Activated CD4-positive, alpha-beta T cell treated with anti-CD3 and anti-CD28 coated beads, Interleukin-2, amount 10 ng/mL, durations not matched to agents 24 days and 14 days (primary cell): ENCODE measurements at regions of chr6 and their contacts with region 1.

Region 1: GRCh38 chr6:157764178-157765033 is 58.6 kb upstream of the SNX9 start:
- DNase-seq: peak; percentile 95
- H3K4me3 Mint-ChIP-seq: peak overlapping the region; percentile 57
- H3K27ac Mint-ChIP-seq: peak overlapping the region; percentile 96
- H3K4me1 Mint-ChIP-seq: peaks cover 70% of the 10 kb centered on the region
- H3K27me3 Mint-ChIP-seq: peaks cover 6% of the 10 kb centered on the region

Region 2: GRCh38 chr6:157123234-157123633 is 641.2 kb before region 1 on chr6:
- intact Hi-C with region 1: no loop called
- DNase-seq: no peak
- H3K4me3 Mint-ChIP-seq: no peak overlapping the region
- H3K27ac Mint-ChIP-seq: no peak overlapping the region
- H3K4me1 Mint-ChIP-seq: peaks cover 1% of the 10 kb centered on the region
- H3K27me3 Mint-ChIP-seq: no peaks in the 10 kb centered on the region

Region 3: DNA sequence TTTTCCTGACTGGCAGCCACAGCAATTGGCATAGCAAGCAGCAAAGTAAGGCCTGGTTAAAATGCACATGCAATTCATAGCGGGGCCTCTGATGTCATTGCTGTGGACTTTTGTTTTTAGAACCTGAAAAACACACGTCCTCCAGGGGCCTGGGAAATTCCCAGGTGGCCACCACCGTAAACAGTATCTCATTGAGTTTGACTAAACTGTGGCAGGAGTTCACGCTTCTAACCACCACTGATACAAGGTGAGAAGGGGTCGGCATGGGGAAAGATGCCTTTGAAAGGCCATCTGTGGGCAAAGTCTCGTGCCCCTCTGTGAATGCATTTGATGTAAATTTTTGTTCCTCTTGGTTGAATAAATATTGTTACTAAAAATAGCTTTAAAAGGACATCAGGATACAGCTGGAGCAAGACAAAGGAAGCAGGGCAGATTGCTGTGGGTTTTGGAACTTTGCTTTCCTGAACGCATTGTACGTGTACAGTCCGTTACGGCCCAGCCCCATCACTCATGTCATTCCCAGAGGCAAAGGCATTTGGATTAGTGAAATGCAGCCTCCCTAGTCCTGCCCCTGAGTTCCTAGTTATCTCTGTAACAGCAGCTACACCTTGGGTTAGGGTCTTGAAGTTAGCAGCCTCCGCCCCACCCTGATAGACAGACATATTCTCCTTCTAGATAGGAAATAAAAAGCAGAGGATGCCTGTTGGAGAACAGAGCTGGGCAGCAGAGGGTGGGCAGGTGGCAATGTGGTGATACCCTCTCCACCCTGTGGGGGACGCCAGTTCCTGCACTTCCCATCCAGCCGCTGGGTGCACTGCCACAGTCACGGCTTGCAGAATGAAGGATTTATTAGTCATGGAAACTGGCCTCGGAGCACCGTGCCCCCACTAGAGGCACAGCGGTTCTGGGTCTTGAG is 303.1 kb before region 1 on chr6:
- intact Hi-C with region 1: loop called (anchors 1 kb)
- DNase-seq: peak; percentile 91
- H3K4me3 Mint-ChIP-seq: peak overlapping the region; percentile 48
- H3K27ac Mint-ChIP-seq: peak overlapping the region; percentile 97
- H3K4me1 Mint-ChIP-seq: peaks cover 64% of the 10 kb centered on the region
- H3K27me3 Mint-ChIP-seq: no peaks in the 10 kb centered on the region

Region 4: DNA sequence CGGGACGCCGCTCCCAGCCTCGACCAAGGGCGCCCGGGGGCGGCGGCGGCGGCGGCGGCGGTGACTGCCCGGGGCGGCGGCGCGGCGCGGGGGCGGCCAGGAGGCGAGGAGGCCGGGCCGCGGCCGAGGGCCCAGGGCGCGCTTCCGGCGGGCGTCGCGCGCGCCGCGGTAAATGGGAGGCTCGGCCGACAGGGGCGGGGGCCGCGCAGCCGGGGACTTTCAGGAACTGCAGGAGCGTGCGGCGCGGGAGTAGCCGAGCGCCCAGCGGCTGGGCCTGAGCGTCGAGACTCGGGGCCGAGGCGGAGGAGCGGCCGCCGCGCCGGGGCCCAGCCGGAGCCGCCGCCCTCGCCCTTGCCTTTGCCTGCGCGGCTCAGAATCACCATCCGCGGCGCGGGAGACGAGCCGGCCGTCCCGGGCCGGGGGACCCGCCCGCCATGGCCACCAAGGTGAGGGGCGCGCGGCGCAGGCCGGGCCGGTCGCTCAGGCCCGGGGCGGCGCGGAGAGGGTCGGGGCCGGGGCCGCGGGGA is 58.7 kb after region 1 on chr6 and contains the start of gene SNX9:
- intact Hi-C with region 1: loop called (anchors 1 kb)
- DNase-seq: peak; percentile 89
- H3K4me3 Mint-ChIP-seq: peak within 1 kb of the TSS; percentile 95
- H3K27ac Mint-ChIP-seq: peak within 1 kb of the TSS; percentile 99
- H3K4me1 Mint-ChIP-seq: peaks cover 34% of the 10 kb centered on the region
- H3K27me3 Mint-ChIP-seq: peaks cover 34% of the 10 kb centered on the region
- total RNA-seq, gene SNX9: 33.7 and 34.0 TPM in 2 replicates

Region 5: DNA sequence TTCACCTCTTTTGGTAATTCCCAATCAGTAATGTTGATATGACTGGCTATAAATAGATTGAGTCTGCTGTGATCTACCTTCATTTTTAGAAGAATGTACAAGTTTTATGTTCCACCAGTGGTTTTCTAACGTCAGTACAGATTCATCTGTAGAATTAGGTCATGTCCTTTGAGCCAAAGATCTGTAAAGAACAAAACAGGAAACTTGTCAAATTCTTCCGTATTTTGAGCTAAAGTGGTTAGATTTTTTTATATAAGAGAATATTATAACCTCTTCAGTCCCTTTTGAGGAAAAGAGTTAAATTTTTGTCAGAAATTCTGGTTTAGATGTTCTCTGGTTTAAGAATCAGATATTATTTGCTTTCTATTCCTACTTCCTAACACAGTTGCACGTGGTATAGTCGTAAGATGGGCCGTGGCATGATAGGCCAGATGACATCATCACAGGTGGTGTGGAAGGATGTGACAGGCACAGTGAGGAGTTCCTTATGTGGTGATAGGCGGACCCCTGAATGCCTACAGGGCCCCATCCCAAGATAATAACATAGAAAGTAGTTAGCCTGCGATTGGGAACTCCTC is 120.9 kb after region 1 on chr6:
- intact Hi-C with region 1: loop called (anchors 1 kb)
- DNase-seq: peak; percentile 88
- H3K4me3 Mint-ChIP-seq: peak overlapping the region; percentile 28
- H3K27ac Mint-ChIP-seq: peak overlapping the region; percentile 83
- H3K4me1 Mint-ChIP-seq: peaks cover 41% of the 10 kb centered on the region
- H3K27me3 Mint-ChIP-seq: no peaks in the 10 kb centered on the region

Region 6: DNA sequence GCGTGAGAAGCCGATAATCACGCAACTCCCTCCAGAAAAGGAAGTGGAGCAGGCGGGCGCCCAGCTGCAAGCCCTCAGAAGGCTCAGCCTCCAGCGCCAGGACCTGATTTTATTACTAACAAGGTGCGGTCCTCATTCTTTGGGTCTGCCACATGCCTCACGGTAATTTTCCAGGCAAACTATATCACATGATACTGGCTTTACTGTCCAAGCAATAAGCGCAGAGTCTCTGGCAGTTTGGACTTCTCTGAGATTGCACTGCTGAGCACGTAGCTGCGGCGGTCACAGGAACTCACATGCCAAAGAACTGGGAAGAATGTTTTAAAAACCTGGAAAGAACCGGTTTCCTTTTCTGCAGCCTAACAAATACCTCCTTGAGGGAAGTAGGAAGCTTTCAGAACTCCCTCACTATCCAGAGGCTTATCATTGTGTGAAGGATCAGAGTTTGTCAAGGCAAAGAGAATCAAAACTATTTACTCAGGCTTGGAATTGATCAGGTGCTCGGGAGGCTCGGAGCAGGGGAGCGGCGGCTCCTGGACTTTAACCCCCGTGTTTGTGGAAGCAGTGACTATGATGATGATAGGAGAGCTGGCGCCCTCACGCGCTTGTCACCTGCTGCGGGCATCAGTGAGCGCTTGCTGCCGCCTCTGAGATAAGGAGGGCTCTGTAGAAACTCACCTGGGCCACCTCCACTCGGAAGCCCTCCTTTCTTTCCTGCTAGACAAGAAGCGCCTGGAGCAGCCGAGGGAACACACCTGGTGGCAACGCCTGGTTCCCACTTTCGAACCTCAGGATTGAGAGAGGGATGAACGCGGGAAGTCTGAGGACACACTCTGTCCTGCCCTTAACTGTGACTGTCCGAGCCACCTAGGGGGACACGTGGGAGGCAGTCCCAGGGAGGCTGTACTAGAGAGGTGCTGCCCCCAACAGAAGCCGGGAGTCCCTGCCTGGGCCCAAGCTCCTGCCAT is 190.0 kb after region 1 on chr6:
- intact Hi-C with region 1: no loop called
- DNase-seq: no peak
- H3K4me3 Mint-ChIP-seq: no peak overlapping the region
- H3K27ac Mint-ChIP-seq: no peak overlapping the region
- H3K4me1 Mint-ChIP-seq: peaks cover 4% of the 10 kb centered on the region
- H3K27me3 Mint-ChIP-seq: peaks cover 20% of the 10 kb centered on the region

Region 7: DNA sequence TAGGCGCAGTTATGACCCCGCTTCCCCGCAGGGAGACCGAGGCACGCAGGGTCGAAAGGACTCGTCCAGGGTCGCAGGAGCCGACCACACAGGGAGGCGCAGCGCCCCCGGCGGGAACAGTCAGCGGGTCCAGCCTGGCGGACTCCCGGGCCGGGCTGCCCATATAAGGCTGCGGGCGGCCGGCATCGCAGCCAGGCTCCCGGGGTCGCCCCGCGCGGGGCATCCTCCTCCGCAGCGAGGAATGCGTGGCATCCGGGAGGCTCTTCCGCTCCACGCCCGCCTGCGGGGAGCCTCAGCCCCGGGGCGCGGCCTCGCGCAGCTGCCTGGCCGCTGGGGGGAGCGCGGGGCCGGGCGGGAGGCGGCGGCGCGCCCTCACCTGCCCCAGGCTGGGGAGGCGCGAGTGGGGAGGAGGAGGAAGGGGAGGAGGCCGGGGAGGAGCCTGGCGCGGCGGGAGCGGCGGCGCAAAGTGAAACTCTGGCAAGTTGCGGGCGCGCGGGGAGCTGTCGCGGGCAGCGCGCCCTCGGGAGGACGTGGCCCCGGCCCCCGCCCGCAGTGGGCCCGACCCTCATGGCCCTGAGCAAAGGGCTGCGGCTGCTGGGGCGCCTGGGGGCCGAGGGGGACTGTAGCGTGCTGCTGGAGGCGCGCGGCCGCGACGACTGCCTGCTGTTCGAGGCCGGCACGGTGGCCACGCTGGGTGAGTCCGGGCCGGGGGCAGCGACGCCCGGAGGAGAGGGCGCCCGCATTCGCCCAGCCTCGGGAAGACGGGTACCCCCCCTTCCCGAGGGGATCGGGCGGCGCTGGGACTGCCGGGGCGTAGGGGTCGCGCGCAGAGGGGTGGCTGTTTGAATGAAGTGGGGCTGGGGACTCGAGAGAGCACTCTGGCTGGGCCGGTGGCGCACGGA is 217.2 kb after region 1 on chr6 and contains the start of gene SYNJ2:
- intact Hi-C with region 1: loop called (anchors 5 kb)
- DNase-seq: peak; percentile 96
- H3K4me3 Mint-ChIP-seq: peak within 1 kb of the TSS; percentile 73
- H3K27ac Mint-ChIP-seq: peak within 1 kb of the TSS; percentile 87
- H3K4me1 Mint-ChIP-seq: peaks cover 48% of the 10 kb centered on the region
- H3K27me3 Mint-ChIP-seq: peaks cover 8% of the 10 kb centered on the region
- total RNA-seq, gene SYNJ2: 22.2 and 24.3 TPM in 2 replicates

Region 8: DNA sequence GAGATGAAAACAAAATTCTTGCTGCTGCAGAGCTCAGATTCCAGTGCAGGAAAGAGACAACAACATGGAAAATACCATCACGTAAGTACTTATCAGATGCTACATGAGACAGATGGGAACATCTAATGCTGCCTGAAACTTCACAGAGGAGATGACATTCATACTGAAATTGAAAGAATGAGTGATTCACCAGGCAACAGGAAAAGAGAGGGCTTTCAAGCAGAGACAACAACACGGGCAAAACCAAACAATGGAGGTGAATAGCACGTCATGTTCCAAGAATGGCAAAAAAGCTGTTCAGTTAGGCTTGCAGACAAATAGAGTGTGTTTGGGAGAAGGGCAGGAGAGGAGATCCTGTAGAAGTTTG is 443.0 kb after region 1 on chr6:
- intact Hi-C with region 1: loop called (anchors 1 kb)
- DNase-seq: peak; percentile 90
- H3K4me3 Mint-ChIP-seq: peak overlapping the region; percentile 70
- H3K27ac Mint-ChIP-seq: peak overlapping the region; percentile 90
- H3K4me1 Mint-ChIP-seq: peaks cover 45% of the 10 kb centered on the region
- H3K27me3 Mint-ChIP-seq: no peaks in the 10 kb centered on the region

Region 9: DNA sequence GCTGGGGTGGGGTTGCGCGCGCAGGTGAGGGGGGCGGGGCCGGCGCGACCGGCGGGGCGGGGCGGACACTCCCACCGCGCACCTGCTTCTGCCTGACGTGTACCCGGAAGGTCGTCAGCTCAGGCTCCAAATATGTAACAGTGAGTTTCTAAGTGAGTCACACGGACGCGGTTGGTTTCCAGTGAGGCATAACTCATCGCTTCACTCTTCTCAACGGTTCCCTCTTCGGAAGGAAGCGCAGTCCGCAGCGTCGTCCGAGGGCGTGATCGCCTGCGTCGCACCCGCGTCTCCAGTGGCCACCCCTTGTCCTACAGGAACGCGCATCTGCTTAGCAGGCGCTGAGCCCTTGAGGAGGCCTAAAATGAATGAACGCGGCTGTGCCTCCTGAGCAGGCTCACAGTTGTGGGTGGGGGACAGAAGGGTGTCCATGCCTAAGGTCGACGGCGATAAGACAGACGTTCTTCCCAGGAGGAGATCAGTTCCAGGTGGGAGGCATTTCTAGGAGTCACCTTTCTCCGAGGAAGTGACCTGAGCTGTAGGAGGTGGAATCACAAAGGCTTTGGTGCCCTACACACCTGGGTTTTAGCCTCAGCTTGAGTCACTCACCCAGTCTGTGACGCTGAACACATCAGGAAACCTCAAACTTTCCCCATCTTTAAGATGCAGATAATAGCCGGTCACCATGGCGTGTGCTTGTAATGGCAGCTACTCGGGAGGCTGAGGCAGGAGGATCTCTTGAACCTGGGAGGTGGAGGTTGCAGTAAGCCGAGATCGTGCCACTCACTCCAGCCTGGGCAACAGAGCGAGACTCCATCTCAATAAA is 1105.6 kb after region 1 on chr6:
- intact Hi-C with region 1: no loop called
- DNase-seq: peak; percentile 96
- H3K4me3 Mint-ChIP-seq: peak overlapping the region; percentile 86
- H3K27ac Mint-ChIP-seq: peak overlapping the region; percentile 98
- H3K4me1 Mint-ChIP-seq: peaks cover 29% of the 10 kb centered on the region
- H3K27me3 Mint-ChIP-seq: peaks cover 4% of the 10 kb centered on the region